ENCODE measurements at regions of chr1 and their contacts with region 1.

Region 1: GRCh38 chr1:66542811-66543767 is 9.1 kb downstream of the SGIP1 start:
- DNase-seq: peak; percentile 98
- ATAC-seq: peak; percentile 99
- H3K4me3 ChIP-seq: peak overlapping the region; percentile 1 to 49 (median 43); a peak in 3 of 6 replicates
- H3K27ac ChIP-seq: peak overlapping the region; percentile 92
- H3K4me1 ChIP-seq: peaks cover 53% of the 10 kb centered on the region
- H3K27me3 ChIP-seq: no peaks in the 10 kb centered on the region
- CTCF ChIP-seq: no peak
- EP300 ChIP-seq: peak in 1 of 2 experiments; percentile 93; a peak in 2 of 4 replicates
- POLR2A ChIP-seq: no peak
- RAD21 ChIP-seq: no peak

Region 2: DNA sequence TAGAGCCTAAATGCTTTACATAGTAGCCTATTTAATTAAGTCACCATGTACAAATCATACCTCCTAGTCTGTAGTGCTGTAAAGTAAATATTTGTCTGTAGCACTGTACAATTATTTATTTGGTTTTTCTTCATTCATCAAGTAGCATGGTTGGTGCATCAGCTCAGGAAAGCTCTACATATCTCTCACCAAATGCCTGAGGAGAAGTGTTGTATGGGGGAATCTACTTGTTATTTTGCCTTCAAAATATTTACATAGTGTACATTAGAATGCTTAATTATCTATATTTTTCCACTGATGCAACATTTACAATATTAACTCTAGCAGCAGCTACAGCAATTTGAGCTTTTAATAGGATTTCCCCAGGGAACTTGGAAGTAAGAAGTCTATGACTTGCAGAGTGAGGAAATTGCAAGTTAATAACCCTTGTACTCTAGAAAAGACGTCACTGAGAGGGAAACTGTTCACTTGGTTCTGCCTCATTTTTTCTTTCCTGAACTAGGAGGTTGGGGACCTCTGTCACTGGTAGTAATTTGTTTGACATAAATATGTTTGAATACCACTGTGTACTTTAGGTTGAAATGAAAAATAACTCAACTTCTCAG is 543.0 kb before region 1 on chr1:
- CTCF ChIA-PET with region 1: no interaction called
- POLR2A ChIA-PET with region 1: no interaction called
- in situ Hi-C with region 1: no loop called
- intact Hi-C with region 1: no loop called
- DNase-seq: no peak
- ATAC-seq: no peak
- H3K4me3 ChIP-seq: no peak overlapping the region
- H3K27ac ChIP-seq: no peak overlapping the region
- H3K4me1 ChIP-seq: no peaks in the 10 kb centered on the region
- H3K27me3 ChIP-seq: no peaks in the 10 kb centered on the region
- CTCF ChIP-seq: no peak
- EP300 ChIP-seq: no peak
- POLR2A ChIP-seq: no peak
- RAD21 ChIP-seq: no peak

Region 3: GRCh38 chr1:66521721-66522365 is 21.2 kb before region 1 on chr1:
- CTCF ChIA-PET with region 1: no interaction called
- POLR2A ChIA-PET with region 1: interaction called, 11 read pairs
- in situ Hi-C with region 1: no loop called
- intact Hi-C with region 1: loop called (anchors 1 kb)
- DNase-seq: no peak
- ATAC-seq: no peak
- H3K4me3 ChIP-seq: no peak overlapping the region
- H3K27ac ChIP-seq: no peak overlapping the region
- H3K4me1 ChIP-seq: peaks cover 16% of the 10 kb centered on the region; the same call in 1 of the 2 replicates
- H3K27me3 ChIP-seq: no peaks in the 10 kb centered on the region
- CTCF ChIP-seq: no peak
- EP300 ChIP-seq: no peak
- POLR2A ChIP-seq: no peak
- RAD21 ChIP-seq: no peak

Region 4: GRCh38 chr1:66532214-66532613 is 10.9 kb before region 1 on chr1:
- CTCF ChIA-PET with region 1: no interaction called
- POLR2A ChIA-PET with region 1: no interaction called
- in situ Hi-C with region 1: no loop called
- intact Hi-C with region 1: no loop called
- DNase-seq: no peak
- ATAC-seq: no peak
- H3K4me3 ChIP-seq: no peak overlapping the region
- H3K27ac ChIP-seq: no peak overlapping the region
- H3K4me1 ChIP-seq: peaks cover 17% of the 10 kb centered on the region
- H3K27me3 ChIP-seq: 0 out of 5 replicates have a peak, but pooled peaks cover 0 to 6% of the 10 kb centered on the region in 2 experiments
- CTCF ChIP-seq: no peak
- EP300 ChIP-seq: no peak
- POLR2A ChIP-seq: no peak
- RAD21 ChIP-seq: no peak

Region 5: GRCh38 chr1:66663730-66664129 is 120.6 kb after region 1 on chr1:
- CTCF ChIA-PET with region 1: no interaction called
- POLR2A ChIA-PET with region 1: no interaction called
- in situ Hi-C with region 1: no loop called
- intact Hi-C with region 1: no loop called
- DNase-seq: no peak
- ATAC-seq: no peak
- H3K4me3 ChIP-seq: no peak overlapping the region
- H3K27ac ChIP-seq: no peak overlapping the region
- H3K4me1 ChIP-seq: no peaks in the 10 kb centered on the region
- H3K27me3 ChIP-seq: no peaks in the 10 kb centered on the region; a peak in 1 of 5 replicates
- CTCF ChIP-seq: no peak
- EP300 ChIP-seq: no peak
- POLR2A ChIP-seq: no peak
- RAD21 ChIP-seq: no peak

Measured in HepG2 (cell line).